Colonic mucosa (tissue), 4 donors: ENCODE measurements at regions of chr1 and their contacts with region 1.

Region 1: DNA sequence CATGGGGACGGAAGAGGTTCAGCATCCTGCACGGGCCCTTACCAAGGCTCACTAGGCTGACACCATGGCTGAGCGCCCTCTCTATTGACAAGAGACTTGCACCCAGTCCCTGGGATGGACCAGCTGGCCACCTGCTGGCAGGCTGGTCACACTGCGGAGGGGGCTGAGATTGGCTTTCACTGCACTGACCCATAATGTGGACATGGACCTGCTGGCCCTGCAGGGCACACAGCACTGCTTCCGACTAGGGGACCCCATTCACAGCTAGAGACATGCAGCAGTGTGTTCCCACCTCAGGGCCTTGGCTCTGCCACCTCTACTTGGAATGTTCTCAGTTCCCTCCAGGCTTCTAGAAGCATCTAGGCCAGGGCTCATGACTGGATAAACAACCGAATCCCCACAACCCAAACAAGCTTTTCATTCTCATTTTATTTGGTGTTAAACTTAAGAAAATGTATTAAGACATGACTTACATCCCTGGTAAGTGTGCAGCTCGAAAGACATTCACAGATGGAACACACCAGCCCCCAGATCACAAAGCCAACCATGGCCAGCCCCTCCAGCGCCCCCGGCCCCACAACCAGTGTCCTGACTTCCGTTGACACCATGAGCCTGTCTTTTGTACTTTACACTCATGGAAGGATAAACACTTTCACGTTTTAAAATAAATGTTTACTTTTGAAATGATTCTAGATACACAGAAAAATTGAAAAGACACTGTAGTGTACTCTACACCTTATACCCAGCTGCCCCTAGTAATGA is 9.3 kb upstream of the SRARP start:
- DNase-seq: peak; percentile 62
- H3K4me3 ChIP-seq: no peak overlapping the region
- H3K27ac ChIP-seq: no peak overlapping the region
- H3K4me1 ChIP-seq: no peaks in the 10 kb centered on the region
- H3K27me3 ChIP-seq: no peaks in the 10 kb centered on the region
- CTCF ChIP-seq: peak; percentile 82

Region 2: DNA sequence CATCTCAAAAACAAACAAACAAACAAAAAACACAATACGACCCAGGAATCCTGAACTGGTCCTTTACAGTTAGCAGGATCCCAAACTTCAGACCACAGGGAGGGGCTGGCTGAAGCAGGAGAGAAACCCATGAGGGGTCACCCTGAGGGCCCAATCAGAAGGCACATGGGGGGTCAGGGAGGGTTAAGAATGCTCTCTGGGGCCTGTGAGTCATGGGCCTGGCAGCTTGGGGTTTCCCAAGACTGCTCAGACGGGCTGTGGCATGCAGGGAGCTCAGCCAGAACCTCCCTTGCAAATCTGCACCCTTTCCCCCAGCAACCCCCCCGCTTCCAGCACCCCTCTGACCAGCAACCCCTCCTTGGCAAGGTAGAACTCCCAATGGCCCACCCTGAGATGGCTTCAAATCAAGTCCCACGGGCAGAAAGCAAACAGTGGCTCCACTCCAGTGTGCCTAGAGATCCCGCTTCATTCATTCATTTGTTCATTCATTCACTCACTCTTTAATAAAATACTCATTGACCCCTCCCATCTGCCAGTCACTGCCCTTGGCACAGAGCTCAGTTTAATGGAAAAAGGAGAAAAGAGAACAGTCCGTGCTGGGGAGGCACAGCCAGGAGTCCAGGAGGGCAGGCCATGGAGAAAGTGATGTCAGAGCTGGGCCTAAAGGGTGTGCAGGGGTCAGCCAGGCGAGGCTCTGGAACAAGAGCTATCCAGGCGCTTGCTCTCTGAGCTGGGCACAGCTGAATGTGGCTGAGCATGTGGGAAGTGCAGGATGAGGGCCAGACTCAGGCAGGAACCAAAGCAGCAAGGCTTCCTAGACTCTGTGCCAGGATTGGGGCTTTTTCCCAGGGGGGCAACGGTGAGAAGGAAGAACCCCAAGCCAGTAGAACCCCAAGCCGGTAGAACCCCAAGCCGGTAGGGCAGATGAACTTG is 195.5 kb before region 1 on chr1:
- intact Hi-C with region 1: loop called (anchors 5 kb)
- DNase-seq: no peak
- H3K4me3 ChIP-seq: no peak overlapping the region
- H3K27ac ChIP-seq: peak overlapping the region; percentile 53
- H3K4me1 ChIP-seq: peaks cover 6% of the 10 kb centered on the region
- H3K27me3 ChIP-seq: no peaks in the 10 kb centered on the region
- CTCF ChIP-seq: no peak

Region 3: GRCh38 chr1:15816674-15817073 is 178.1 kb before region 1 on chr1:
- intact Hi-C with region 1: loop called (anchors 5 kb)
- DNase-seq: no peak
- H3K4me3 ChIP-seq: no peak overlapping the region
- H3K27ac ChIP-seq: no peak overlapping the region
- H3K4me1 ChIP-seq: no peaks in the 10 kb centered on the region
- H3K27me3 ChIP-seq: no peaks in the 10 kb centered on the region
- CTCF ChIP-seq: no peak